ENCODE measurements at regions of chr3 and their contacts with region 1.

Region 1: GRCh38 chr3:181326637-181327223 is 337.2 kb upstream of the DNAJC19 start:
- DNase-seq: no peak
- ATAC-seq: peak in 2 of 4 donors; percentile 44 to 45
- H3K4me3 ChIP-seq: no peak overlapping the region
- H3K27ac ChIP-seq: no peak overlapping the region
- H3K4me1 ChIP-seq: no peaks in the 10 kb centered on the region
- H3K27me3 ChIP-seq: no peaks in the 10 kb centered on the region
- CTCF ChIP-seq: peak; percentile 41 to 65 (median 58)
- POLR2A ChIP-seq: no peak

Region 2: GRCh38 chr3:181265717-181266333 is 60.9 kb before region 1 on chr3:
- intact Hi-C with region 1: no loop called
- DNase-seq: no peak
- ATAC-seq: no peak
- H3K4me3 ChIP-seq: peak overlapping the region in 1 of 12 donors; percentile 19
- H3K27ac ChIP-seq: no peak overlapping the region
- H3K4me1 ChIP-seq: no peaks in the 10 kb centered on the region
- H3K27me3 ChIP-seq: no peaks in the 10 kb centered on the region
- CTCF ChIP-seq: no peak
- POLR2A ChIP-seq: no peak

Region 3: GRCh38 chr3:181555681-181556080 is 229.0 kb after region 1 on chr3:
- intact Hi-C with region 1: loop called in 3 of 10 experiments (anchors 10 kb)
- DNase-seq: peak; percentile 24 to 72 (median 59)
- ATAC-seq: peak; percentile 55 to 89 (median 84)
- H3K4me3 ChIP-seq: no peak overlapping the region
- H3K27ac ChIP-seq: no peak overlapping the region
- H3K4me1 ChIP-seq: peaks cover 0 to 15% (median 0%) of the 10 kb centered on the region in 12 donors
- H3K27me3 ChIP-seq: no peaks in the 10 kb centered on the region
- CTCF ChIP-seq: no peak
- POLR2A ChIP-seq: no peak

Region 4: GRCh38 chr3:181694805-181695660 is 368.3 kb after region 1 on chr3:
- intact Hi-C with region 1: loop called (anchors 2 to 5 kb)
- DNase-seq: peak in 4 of 5 donors; percentile 35 to 68 (median 59)
- ATAC-seq: peak in 3 of 4 donors; percentile 79 to 93 (median 86)
- H3K4me3 ChIP-seq: peak overlapping the region; percentile 13 to 58 (median 44)
- H3K27ac ChIP-seq: peak overlapping the region in 3 of 12 donors; percentile 14 to 29 (median 29)
- H3K4me1 ChIP-seq: peaks cover 0 to 22% (median 13%) of the 10 kb centered on the region in 12 donors
- H3K27me3 ChIP-seq: peaks cover 24 to 60% (median 50%) of the 10 kb centered on the region in 9 donors
- CTCF ChIP-seq: peak in 6 of 12 donors; percentile 9 to 36 (median 22)
- POLR2A ChIP-seq: no peak

Region 5: GRCh38 chr3:181700168-181701087 is 373.7 kb after region 1 on chr3:
- intact Hi-C with region 1: loop called (anchors 2 to 5 kb)
- DNase-seq: peak in 4 of 5 donors; percentile 41 to 60 (median 50)
- ATAC-seq: peak in 3 of 4 donors; percentile 69 to 81 (median 77)
- H3K4me3 ChIP-seq: peak overlapping the region in 3 of 12 donors; percentile 8 to 25 (median 13)
- H3K27ac ChIP-seq: no peak overlapping the region
- H3K4me1 ChIP-seq: peaks cover 0 to 31% (median 15%) of the 10 kb centered on the region in 12 donors
- H3K27me3 ChIP-seq: peaks cover 57 to 99% (median 97%) of the 10 kb centered on the region in 9 donors
- CTCF ChIP-seq: peak; percentile 61 to 90 (median 83)
- POLR2A ChIP-seq: no peak